H1 (cell line): ENCODE measurements at regions of chr12 and their contacts with region 1.

Region 1: DNA sequence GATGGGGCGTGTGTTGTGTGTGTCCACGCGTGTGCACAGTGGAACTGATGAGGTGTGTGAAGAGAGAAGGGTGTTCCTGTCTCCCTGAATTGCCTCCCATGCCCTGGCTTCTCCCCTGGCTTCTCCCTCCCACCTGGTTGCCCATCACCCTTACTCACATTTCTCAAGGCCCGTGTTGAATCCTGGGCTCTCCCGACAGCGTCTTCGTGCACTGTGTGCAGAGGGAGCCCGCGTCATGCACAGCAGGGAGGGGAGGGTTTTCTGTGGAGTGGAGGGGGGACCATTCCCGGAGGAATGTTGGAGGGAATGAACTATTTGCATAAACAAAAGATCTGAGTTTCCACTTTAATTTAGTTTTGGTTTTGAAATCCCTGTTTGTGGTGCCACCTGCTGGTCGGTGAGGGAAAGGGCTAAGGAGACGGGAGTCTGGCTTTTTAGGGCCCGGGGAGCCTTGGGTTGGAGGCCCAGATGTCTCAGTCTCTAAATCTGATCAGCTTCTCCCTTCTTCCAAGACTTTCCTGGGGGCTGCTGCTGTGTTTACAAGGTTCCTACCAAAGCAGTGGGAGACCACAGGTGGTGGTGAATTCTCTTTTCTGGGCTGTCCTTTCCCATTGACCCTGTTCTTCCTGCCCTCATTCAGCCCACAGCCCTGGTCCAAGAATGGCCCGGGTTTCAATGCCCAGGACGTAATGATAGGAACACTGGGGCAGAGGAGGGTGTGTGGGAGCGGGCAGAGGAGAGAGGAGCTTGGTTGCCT is at the start of gene C1R:
- DNase-seq: peak in 1 of 2 experiments; percentile 85
- H3K4me3 ChIP-seq: peak within 1 kb of the TSS in 2 of 4 experiments; percentile 25 to 49; a peak in 2 of 8 replicates
- H3K27ac ChIP-seq: no peak within 1 kb of the TSS
- H3K4me1 ChIP-seq: peaks cover 7 to 21% (median 16%) of the 10 kb centered on the region in 4 experiments
- H3K27me3 ChIP-seq: no peaks in the 10 kb centered on the region; a peak in 1 of 7 replicates
- CTCF ChIP-seq: peak; percentile 73 to 80 (median 75)
- EP300 ChIP-seq: no peak
- POLR2A ChIP-seq: 0 out of 3 replicates have a peak, but pooled peaks of 1 of the 2 experiments have one; percentile 14
- RAD21 ChIP-seq: peak; percentile 60 to 75
- total RNA-seq, gene C1R: 6.9 and 7.7 TPM in 2 replicates

Region 2: DNA sequence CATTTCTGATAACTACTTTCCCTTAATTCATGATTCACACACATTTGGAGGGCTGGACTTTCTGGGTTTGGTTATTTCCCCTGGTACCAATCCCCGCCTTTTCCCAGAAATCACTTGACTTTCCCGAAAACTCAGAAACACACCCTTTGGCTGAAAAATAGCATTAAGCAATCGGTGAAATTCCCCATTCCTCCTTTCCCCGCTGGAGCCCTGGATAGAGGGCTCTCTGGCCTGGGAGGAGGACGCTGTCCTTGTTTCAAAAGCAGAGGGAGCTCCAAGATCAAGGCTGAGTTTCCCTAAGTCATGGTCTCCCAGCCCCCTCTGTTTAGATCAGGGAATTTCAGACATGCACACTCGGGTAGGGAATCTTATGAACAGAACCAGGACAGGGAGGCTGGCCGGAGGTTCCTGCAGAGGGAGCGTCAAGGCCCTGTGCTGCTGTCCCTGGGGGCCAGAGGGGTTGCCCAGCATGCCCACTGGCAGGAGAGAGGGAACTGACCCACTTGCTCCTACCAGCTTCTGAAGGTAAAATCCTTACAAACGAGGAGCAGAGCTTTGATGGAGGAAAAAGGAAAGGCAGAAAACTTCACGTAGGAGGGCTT is 32.0 kb before region 1 on chr12 and contains the start of gene C1S:
- CTCF ChIA-PET with region 1: interaction called, 12 read pairs
- POLR2A ChIA-PET with region 1: interaction called, 5 read pairs
- DNase-seq: peak; percentile 36 to 63
- H3K4me3 ChIP-seq: no peak within 1 kb of the TSS
- H3K27ac ChIP-seq: no peak within 1 kb of the TSS
- H3K4me1 ChIP-seq: peaks cover 0 to 5% (median 2%) of the 10 kb centered on the region in 4 experiments; a peak in 3 of 7 replicates
- H3K27me3 ChIP-seq: no peaks in the 10 kb centered on the region
- CTCF ChIP-seq: peak; percentile 49 to 96 (median 78)
- EP300 ChIP-seq: no peak
- POLR2A ChIP-seq: no peak
- RAD21 ChIP-seq: peak; percentile 91 to 94
- total RNA-seq, gene C1S: 5.0 and 7.3 TPM in 2 replicates

Region 3: DNA sequence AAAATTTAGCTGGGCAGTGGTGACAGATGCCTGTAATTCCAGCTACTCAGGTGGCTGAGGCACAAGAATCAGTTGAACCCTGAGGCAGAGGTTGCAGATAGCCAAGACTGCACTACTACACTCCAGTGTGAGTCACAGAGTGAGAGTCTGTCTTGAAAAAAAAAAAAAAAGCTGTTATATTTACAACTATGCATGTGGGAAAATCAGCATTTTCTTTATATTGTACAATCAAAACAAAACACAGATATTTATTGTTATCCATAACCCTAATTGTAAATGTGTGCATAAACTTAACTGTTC is 12.6 kb before region 1 on chr12:
- CTCF ChIA-PET with region 1: interaction called, 20 read pairs
- POLR2A ChIA-PET with region 1: interaction called, 3 read pairs
- DNase-seq: no peak
- H3K4me3 ChIP-seq: no peak overlapping the region
- H3K27ac ChIP-seq: no peak overlapping the region
- H3K4me1 ChIP-seq: no peaks in the 10 kb centered on the region
- H3K27me3 ChIP-seq: no peaks in the 10 kb centered on the region
- CTCF ChIP-seq: no peak
- EP300 ChIP-seq: no peak
- POLR2A ChIP-seq: no peak
- RAD21 ChIP-seq: no peak

Region 4: DNA sequence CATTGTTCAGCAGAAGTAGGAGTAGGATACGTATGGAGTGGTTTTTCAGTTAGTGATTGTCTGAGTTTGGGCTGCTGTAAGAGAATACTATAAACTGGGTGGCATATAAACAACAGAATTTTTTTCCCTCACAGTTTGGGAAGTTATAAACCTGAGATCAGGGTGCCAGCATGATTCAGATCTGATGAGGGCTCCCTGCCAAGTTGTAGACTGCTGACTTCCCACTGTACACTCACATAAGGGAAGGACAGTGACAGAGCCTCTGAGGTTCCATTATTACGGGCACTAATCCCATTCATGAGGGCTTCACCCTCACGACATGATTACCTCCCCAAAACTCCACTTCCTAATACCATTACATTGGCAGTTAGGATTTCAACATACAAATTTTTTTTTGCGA is 262.1 kb after region 1 on chr12:
- CTCF ChIA-PET with region 1: no interaction called
- POLR2A ChIA-PET with region 1: no interaction called
- DNase-seq: no peak
- H3K4me3 ChIP-seq: no peak overlapping the region
- H3K27ac ChIP-seq: no peak overlapping the region
- H3K4me1 ChIP-seq: no peaks in the 10 kb centered on the region
- H3K27me3 ChIP-seq: no peaks in the 10 kb centered on the region
- CTCF ChIP-seq: no peak
- EP300 ChIP-seq: no peak
- POLR2A ChIP-seq: no peak
- RAD21 ChIP-seq: no peak